Lower leg skin (tissue), 4 donors: ENCODE measurements at regions of chr19 and their contacts with region 1.

Region 1: GRCh38 chr19:51016798-51017683 is 2.5 kb downstream of the KLK10 start:
- DNase-seq: peak; percentile 52 to 93
- H3K4me3 ChIP-seq: peak overlapping the region; percentile 27
- CTCF ChIP-seq: no peak
- POLR2A ChIP-seq: no peak

Region 2: GRCh38 chr19:50882183-50882582 is 134.9 kb before region 1 on chr19:
- intact Hi-C with region 1: no loop called
- DNase-seq: no peak
- H3K4me3 ChIP-seq: no peak overlapping the region
- CTCF ChIP-seq: no peak
- POLR2A ChIP-seq: no peak

Region 3: GRCh38 chr19:51097166-51097738 is 80.2 kb after region 1 on chr19:
- intact Hi-C with region 1: loop called (anchors 5 kb)
- DNase-seq: peak in 1 of 2 donors; percentile 41
- H3K4me3 ChIP-seq: no peak overlapping the region
- CTCF ChIP-seq: no peak
- POLR2A ChIP-seq: no peak